ENCODE measurements at regions of chr13 and their contacts with region 1.

Region 1: DNA sequence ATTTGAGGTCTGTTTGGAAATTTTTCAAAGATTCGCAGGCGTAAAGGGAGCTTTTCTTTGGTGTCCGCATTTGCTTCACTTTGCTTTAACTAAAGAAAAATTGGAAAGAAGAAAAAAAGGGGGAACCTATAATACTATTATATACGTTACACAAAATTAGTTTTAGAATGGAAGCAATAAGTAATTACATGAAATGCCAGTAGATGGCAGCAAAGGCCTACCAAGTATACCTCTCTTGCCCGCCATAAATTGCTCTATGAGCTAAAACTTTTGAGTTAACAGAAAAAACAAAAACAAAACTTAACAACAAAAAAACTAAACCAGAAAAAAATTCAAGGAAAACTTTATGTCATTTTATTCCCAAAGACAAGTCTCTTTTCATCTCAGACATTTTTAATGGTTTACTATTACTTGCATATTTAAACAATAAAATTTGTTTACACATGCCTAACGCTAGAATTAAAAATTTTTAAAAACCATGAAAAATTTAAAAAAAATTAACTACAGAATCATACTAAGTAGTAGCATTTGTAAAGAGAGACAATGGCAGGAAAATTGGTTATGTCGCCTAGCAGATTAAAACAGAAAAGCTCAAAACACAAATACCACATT is 271.4 kb downstream of the NALCN start:
- DNase-seq: peak; percentile 39
- ATAC-seq: peak; percentile 72
- H3K4me3 ChIP-seq: no peak overlapping the region
- H3K27ac ChIP-seq: no peak overlapping the region
- H3K4me1 ChIP-seq: no peaks in the 10 kb centered on the region
- H3K27me3 ChIP-seq: no peaks in the 10 kb centered on the region; the same call in 1 of the 2 replicates
- CTCF ChIP-seq: peak; percentile 34 to 71 (median 47); a peak in 5 of 6 replicates
- POLR2A ChIP-seq: no peak
- RAD21 ChIP-seq: peak; percentile 72

Region 2: DNA sequence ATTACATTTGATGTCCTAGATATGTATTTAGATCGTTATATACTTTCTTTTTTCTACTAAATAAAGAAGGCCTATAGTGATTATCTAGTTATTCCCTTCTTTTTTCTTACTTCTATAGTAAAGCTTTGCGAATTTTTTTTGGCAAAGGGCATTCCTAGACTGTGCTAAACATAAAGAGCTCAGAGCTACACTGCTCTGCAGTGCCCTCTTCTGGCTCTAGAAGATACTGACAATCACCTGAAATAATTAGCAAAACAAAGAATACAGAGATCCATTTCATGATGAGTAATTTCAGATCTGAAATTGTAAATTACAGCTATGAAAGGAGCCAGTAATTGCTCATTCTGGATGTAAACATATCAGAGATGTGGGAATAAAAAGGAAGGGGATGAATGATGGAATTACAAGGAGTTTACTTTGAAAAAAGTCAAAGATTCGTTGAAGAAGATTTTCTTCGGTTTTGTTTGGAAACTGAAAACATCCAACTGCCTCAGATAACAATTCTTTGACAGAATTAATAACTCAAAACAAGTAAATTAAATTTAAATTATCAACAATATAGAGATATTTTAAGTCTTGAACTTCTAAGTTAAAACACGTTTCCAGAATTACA is 17.1 kb before region 1 on chr13:
- CTCF ChIA-PET with region 1: interaction called, 16 read pairs
- POLR2A ChIA-PET with region 1: no interaction called
- RAD21 ChIA-PET with region 1: no interaction called
- intact Hi-C with region 1: no loop called
- DNase-seq: peak; percentile 21
- ATAC-seq: peak; percentile 80
- H3K4me3 ChIP-seq: no peak overlapping the region
- H3K27ac ChIP-seq: no peak overlapping the region
- H3K4me1 ChIP-seq: no peaks in the 10 kb centered on the region
- H3K27me3 ChIP-seq: no peaks in the 10 kb centered on the region
- CTCF ChIP-seq: peak; percentile 45 to 74 (median 62); a peak in 5 of 6 replicates
- POLR2A ChIP-seq: no peak
- RAD21 ChIP-seq: peak; percentile 60

Region 3: GRCh38 chr13:101433895-101434294 is 289.0 kb after region 1 on chr13:
- CTCF ChIA-PET with region 1: no interaction called
- POLR2A ChIA-PET with region 1: no interaction called
- RAD21 ChIA-PET with region 1: no interaction called
- intact Hi-C with region 1: no loop called
- DNase-seq: no peak
- ATAC-seq: no peak
- H3K4me3 ChIP-seq: no peak overlapping the region
- H3K27ac ChIP-seq: no peak overlapping the region
- H3K4me1 ChIP-seq: no peaks in the 10 kb centered on the region
- H3K27me3 ChIP-seq: no peaks in the 10 kb centered on the region
- CTCF ChIP-seq: no peak
- POLR2A ChIP-seq: no peak
- RAD21 ChIP-seq: no peak

Region 4: GRCh38 chr13:101474419-101474957 is 329.6 kb after region 1 on chr13:
- CTCF ChIA-PET with region 1: interaction called, 12 read pairs
- POLR2A ChIA-PET with region 1: no interaction called
- RAD21 ChIA-PET with region 1: no interaction called
- intact Hi-C with region 1: loop called (anchors 10 kb)
- DNase-seq: no peak
- ATAC-seq: no peak
- H3K4me3 ChIP-seq: no peak overlapping the region
- H3K27ac ChIP-seq: no peak overlapping the region
- H3K4me1 ChIP-seq: no peaks in the 10 kb centered on the region
- H3K27me3 ChIP-seq: no peaks in the 10 kb centered on the region
- CTCF ChIP-seq: no peak
- POLR2A ChIP-seq: no peak
- RAD21 ChIP-seq: peak; percentile 27; the same call in 1 of the 2 replicates

Region 5: GRCh38 chr13:101942038-101942437 is 797.1 kb after region 1 on chr13:
- CTCF ChIA-PET with region 1: interaction called, 13 read pairs
- POLR2A ChIA-PET with region 1: no interaction called
- RAD21 ChIA-PET with region 1: no interaction called
- intact Hi-C with region 1: loop called (anchors 2 kb)
- DNase-seq: no peak
- ATAC-seq: no peak; the same call in 1 of the 2 replicates
- H3K4me3 ChIP-seq: no peak overlapping the region
- H3K27ac ChIP-seq: no peak overlapping the region
- H3K4me1 ChIP-seq: no peaks in the 10 kb centered on the region
- H3K27me3 ChIP-seq: no peaks in the 10 kb centered on the region
- CTCF ChIP-seq: peak in 2 of 3 experiments; percentile 31 to 44; a peak in 2 of 6 replicates
- POLR2A ChIP-seq: no peak
- RAD21 ChIP-seq: peak; percentile 31

Region 6: GRCh38 chr13:102555917-102556553 is 1411.1 kb after region 1 on chr13:
- CTCF ChIA-PET with region 1: interaction called, 40 read pairs
- POLR2A ChIA-PET with region 1: no interaction called
- RAD21 ChIA-PET with region 1: interaction called, 5 to 6 read pairs
- intact Hi-C with region 1: loop called (anchors 2 kb)
- DNase-seq: peak; percentile 21
- ATAC-seq: peak; percentile 83
- H3K4me3 ChIP-seq: no peak overlapping the region
- H3K27ac ChIP-seq: no peak overlapping the region
- H3K4me1 ChIP-seq: no peaks in the 10 kb centered on the region
- H3K27me3 ChIP-seq: peaks cover 5% of the 10 kb centered on the region; the same call in 1 of the 2 replicates
- CTCF ChIP-seq: peak; percentile 29 to 65 (median 34); a peak in 4 of 6 replicates
- POLR2A ChIP-seq: no peak
- RAD21 ChIP-seq: peak; percentile 61

Region 7: GRCh38 chr13:102800145-102801041 is 1655.5 kb after region 1 on chr13:
- CTCF ChIA-PET with region 1: no interaction called
- POLR2A ChIA-PET with region 1: no interaction called
- RAD21 ChIA-PET with region 1: no interaction called
- intact Hi-C with region 1: loop called (anchors 5 kb)
- DNase-seq: peak; percentile 34
- ATAC-seq: peak; percentile 74
- H3K4me3 ChIP-seq: peak overlapping the region; percentile 82 to 99
- H3K27ac ChIP-seq: peak overlapping the region; percentile 71
- H3K4me1 ChIP-seq: peaks cover 6 to 11% of the 10 kb centered on the region in 2 experiments
- H3K27me3 ChIP-seq: no peaks in the 10 kb centered on the region
- CTCF ChIP-seq: peak; percentile 49 to 78 (median 77); a peak in 5 of 6 replicates
- POLR2A ChIP-seq: no peak
- RAD21 ChIP-seq: peak; percentile 22

Measured in HCT116 (cell line).